ENCODE measurements at regions of chr3 and their contacts with region 1.

Region 1: GRCh38 chr3:11651900-11652299 is 8.2 kb upstream of the VGLL4 start:
- DNase-seq: no peak
- ATAC-seq: no peak
- H3K4me3 ChIP-seq: no peak overlapping the region
- H3K27ac ChIP-seq: no peak overlapping the region
- H3K4me1 ChIP-seq: peaks cover 0 to 12% (median 4%) of the 10 kb centered on the region in 9 donors
- H3K27me3 ChIP-seq: no peaks in the 10 kb centered on the region
- CTCF ChIP-seq: peak; percentile 35 to 74 (median 62)

Region 2: DNA sequence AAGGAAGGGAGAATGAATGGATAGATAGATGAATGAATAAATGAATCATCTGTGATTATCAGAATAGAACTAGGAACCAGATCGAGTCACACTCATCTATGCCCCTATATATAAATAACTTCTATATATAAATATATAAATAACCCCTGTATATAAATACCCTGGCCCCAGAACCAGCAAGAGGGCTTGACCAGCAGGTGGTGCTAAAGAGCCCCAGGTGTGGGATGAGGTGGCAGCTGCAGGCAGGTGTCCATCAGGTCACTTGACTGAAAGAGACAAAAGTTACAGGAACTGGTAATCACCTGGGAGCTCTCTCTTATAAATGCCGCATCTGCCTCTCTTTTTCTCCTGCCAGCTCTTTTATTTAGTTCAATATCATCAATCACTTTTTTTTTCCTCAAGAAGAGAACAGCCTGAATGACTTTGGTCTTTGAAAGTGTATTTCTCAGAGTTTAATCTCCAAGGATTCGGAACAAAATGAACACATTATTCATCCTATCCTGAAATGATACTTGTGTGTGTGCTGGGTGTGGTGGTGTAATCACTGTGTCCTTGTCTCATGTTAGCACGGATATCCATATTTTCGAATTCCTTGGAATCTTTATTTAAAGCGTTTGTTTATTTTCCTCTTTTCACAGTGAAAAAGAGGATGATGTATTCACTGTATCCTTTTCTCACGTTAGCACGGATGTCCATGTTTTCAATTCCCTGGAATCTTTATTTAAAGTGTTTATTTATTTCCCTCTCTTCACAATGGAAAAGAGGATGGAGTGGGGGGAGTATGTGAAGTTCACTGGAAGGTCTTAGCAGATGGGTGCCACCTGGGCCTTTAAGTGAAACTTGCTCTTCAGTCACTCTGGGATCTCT is 415.1 kb before region 1 on chr3:
- intact Hi-C with region 1: loop called in 1 of 10 experiments (anchors 10 kb)
- DNase-seq: peak; percentile 40 to 53
- ATAC-seq: no peak
- H3K4me3 ChIP-seq: no peak overlapping the region
- H3K27ac ChIP-seq: no peak overlapping the region
- H3K4me1 ChIP-seq: peaks cover 0 to 8% (median 0%) of the 10 kb centered on the region in 9 donors
- H3K27me3 ChIP-seq: peaks cover 0 to 14% (median 4%) of the 10 kb centered on the region in 7 donors
- CTCF ChIP-seq: peak; percentile 61 to 80 (median 77)

Region 3: GRCh38 chr3:11379233-11379823 is 272.6 kb before region 1 on chr3:
- intact Hi-C with region 1: loop called (anchors 2 to 5 kb)
- DNase-seq: no peak
- ATAC-seq: peak in 7 of 8 donors; percentile 38 to 77 (median 69)
- H3K4me3 ChIP-seq: no peak overlapping the region
- H3K27ac ChIP-seq: no peak overlapping the region
- H3K4me1 ChIP-seq: peaks cover 0 to 17% (median 4%) of the 10 kb centered on the region in 9 donors
- H3K27me3 ChIP-seq: no peaks in the 10 kb centered on the region
- CTCF ChIP-seq: peak; percentile 42 to 78 (median 62)

Region 4: GRCh38 chr3:11719406-11720230 is 67.7 kb after region 1 on chr3:
- intact Hi-C with region 1: loop called in 1 of 10 experiments (anchors 5 kb)
- DNase-seq: peak; percentile 67 to 73
- ATAC-seq: peak; percentile 60 to 87 (median 72)
- H3K4me3 ChIP-seq: peak overlapping the region; percentile 78 to 93 (median 88)
- H3K27ac ChIP-seq: peak overlapping the region; percentile 84 to 98 (median 93)
- H3K4me1 ChIP-seq: peaks cover 0 to 32% (median 25%) of the 10 kb centered on the region in 9 donors
- H3K27me3 ChIP-seq: peaks cover 0 to 13% (median 0%) of the 10 kb centered on the region in 7 donors
- CTCF ChIP-seq: no peak

Region 5: GRCh38 chr3:11803977-11804892 is 152.3 kb after region 1 on chr3:
- intact Hi-C with region 1: loop called in 9 of 10 experiments (anchors 5 to 10 kb)
- DNase-seq: peak in 1 of 2 donors; percentile 16
- ATAC-seq: peak in 5 of 8 donors; percentile 58 to 85 (median 76)
- H3K4me3 ChIP-seq: no peak overlapping the region
- H3K27ac ChIP-seq: no peak overlapping the region
- H3K4me1 ChIP-seq: no peaks in the 10 kb centered on the region
- H3K27me3 ChIP-seq: no peaks in the 10 kb centered on the region
- CTCF ChIP-seq: peak; percentile 46 to 83 (median 73)

Measured in heart right ventricle (tissue), 16 donors.